Caco-2 (cell line): ENCODE measurements at regions of chr1 and their contacts with region 1.

Region 1: GRCh38 chr1:206583707-206584648 is 28.3 kb downstream of the EIF2D start:
- DNase-seq: peak; percentile 65 to 78
- H3K4me3 ChIP-seq: no peak overlapping the region
- H3K4me3 Mint-ChIP-seq: no peak overlapping the region
- H3K27ac Mint-ChIP-seq: no peak overlapping the region
- H3K4me1 ChIP-seq: no peaks in the 10 kb centered on the region
- H3K4me1 Mint-ChIP-seq: no peaks in the 10 kb centered on the region
- H3K27me3 ChIP-seq: no peaks in the 10 kb centered on the region
- H3K27me3 Mint-ChIP-seq: no peaks in the 10 kb centered on the region
- CTCF ChIP-seq: peak; percentile 82

Region 2: GRCh38 chr1:206479183-206480125 is 104.5 kb before region 1 on chr1:
- CTCF ChIA-PET with region 1: interaction called, 22 read pairs
- POLR2A ChIA-PET with region 1: no interaction called
- intact Hi-C with region 1: loop called (anchors 1 kb)
- DNase-seq: peak; percentile 65 to 68
- H3K4me3 ChIP-seq: no peak overlapping the region
- H3K4me3 Mint-ChIP-seq: no peak overlapping the region
- H3K27ac Mint-ChIP-seq: no peak overlapping the region
- H3K4me1 ChIP-seq: no peaks in the 10 kb centered on the region
- H3K4me1 Mint-ChIP-seq: no peaks in the 10 kb centered on the region
- H3K27me3 ChIP-seq: no peaks in the 10 kb centered on the region
- H3K27me3 Mint-ChIP-seq: no peaks in the 10 kb centered on the region
- CTCF ChIP-seq: peak; percentile 83 to 85

Region 3: DNA sequence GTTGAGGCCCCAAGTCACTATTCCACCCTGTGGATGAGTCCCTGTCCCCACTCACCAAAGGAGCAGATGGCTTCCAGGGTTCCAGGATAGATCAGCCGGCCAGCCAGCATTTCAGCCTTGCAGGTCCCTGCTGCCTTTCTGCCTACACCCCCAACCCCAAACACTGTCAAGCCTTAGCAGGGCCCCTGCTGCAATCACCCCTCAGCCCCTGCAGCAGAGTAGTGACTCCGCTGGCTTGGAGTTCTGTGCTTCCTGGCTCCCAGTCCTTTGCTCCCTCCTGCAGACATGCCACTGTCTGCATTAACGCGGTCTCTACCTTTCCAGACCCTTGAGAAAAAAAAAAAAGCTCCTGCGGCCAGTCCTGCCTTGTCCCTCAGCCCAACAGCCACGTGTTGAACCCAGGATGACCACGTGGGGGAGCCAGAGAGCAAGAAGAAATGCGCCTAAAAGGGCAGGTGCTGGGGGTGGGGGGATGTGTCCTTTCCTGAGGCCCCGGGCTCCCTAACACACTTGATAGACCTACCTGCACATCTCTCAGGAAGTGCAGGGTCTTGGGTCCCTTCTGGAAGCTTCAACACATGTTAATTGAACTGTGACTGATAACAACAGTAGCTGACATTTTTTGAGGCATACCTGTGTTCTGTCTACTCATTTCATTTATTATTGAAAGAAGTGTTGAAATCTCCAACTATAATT is 39.3 kb before region 1 on chr1:
- CTCF ChIA-PET with region 1: interaction called, 23 read pairs
- POLR2A ChIA-PET with region 1: interaction called, 3 read pairs
- intact Hi-C with region 1: loop called (anchors 1 kb)
- DNase-seq: peak; percentile 77 to 89
- H3K4me3 ChIP-seq: no peak overlapping the region
- H3K4me3 Mint-ChIP-seq: no peak overlapping the region
- H3K27ac Mint-ChIP-seq: no peak overlapping the region
- H3K4me1 ChIP-seq: no peaks in the 10 kb centered on the region
- H3K4me1 Mint-ChIP-seq: no peaks in the 10 kb centered on the region
- H3K27me3 ChIP-seq: no peaks in the 10 kb centered on the region
- H3K27me3 Mint-ChIP-seq: peaks cover 7% of the 10 kb centered on the region
- CTCF ChIP-seq: peak; percentile 80 to 94

Region 4: DNA sequence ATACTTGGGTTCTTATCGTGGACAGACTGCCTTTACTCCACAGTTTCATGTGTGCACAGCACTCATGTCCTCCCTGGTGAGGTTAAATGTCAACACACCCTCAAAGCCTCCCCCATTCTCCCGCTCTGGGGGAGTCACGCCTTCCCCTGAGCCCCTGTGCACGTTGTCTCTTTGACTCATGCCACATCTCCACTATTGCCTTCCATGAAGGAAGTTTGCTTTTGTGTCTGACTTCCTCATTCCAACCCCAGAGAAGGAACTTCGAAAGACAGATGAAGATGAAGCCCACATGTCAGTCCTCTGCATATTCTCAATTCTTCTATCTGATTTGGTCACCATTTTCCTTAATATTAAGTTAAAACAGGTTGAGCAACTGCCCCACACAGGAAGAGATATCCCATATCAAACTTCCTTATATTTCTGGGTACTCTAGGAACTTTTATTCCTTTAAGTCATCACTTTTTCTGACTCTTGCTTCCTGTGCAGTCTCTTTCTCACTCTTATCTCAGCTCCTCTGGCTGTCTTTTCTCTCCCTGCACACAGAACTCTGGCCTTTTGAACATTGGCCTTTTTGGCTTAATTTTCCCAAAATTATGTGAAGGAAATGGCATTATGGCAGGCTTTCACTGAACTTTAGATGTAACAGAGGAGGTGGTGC is 561.6 kb after region 1 on chr1:
- CTCF ChIA-PET with region 1: no interaction called
- POLR2A ChIA-PET with region 1: no interaction called
- intact Hi-C with region 1: no loop called
- DNase-seq: no peak
- H3K4me3 ChIP-seq: no peak overlapping the region
- H3K4me3 Mint-ChIP-seq: no peak overlapping the region
- H3K27ac Mint-ChIP-seq: no peak overlapping the region
- H3K4me1 ChIP-seq: no peaks in the 10 kb centered on the region
- H3K4me1 Mint-ChIP-seq: no peaks in the 10 kb centered on the region
- H3K27me3 ChIP-seq: no peaks in the 10 kb centered on the region
- H3K27me3 Mint-ChIP-seq: no peaks in the 10 kb centered on the region
- CTCF ChIP-seq: no peak